Heart right ventricle (tissue), 16 donors: ENCODE measurements at regions of chr2 and their contacts with region 1.

Region 1: GRCh38 chr2:9555297-9556141 is at the start of gene ADAM17:
- DNase-seq: peak; percentile 97
- ATAC-seq: peak; percentile 96 to 98 (median 97)
- H3K4me3 ChIP-seq: peak within 1 kb of the TSS; percentile 69 to 95 (median 86)
- H3K27ac ChIP-seq: peak within 1 kb of the TSS; percentile 95 to 100 (median 99)
- H3K4me1 ChIP-seq: peaks cover 4 to 60% (median 52%) of the 10 kb centered on the region in 9 donors
- H3K27me3 ChIP-seq: no peaks in the 10 kb centered on the region
- CTCF ChIP-seq: peak; percentile 28 to 68 (median 55)
- total RNA-seq, gene ADAM17: 11.4 to 20.0 (median 14.6) TPM

Region 2: GRCh38 chr2:9573840-9574239 is 18.3 kb after region 1 on chr2:
- intact Hi-C with region 1: loop called in 1 of 10 experiments (anchors 1 kb)
- DNase-seq: no peak
- ATAC-seq: no peak
- H3K4me3 ChIP-seq: no peak overlapping the region
- H3K27ac ChIP-seq: peak overlapping the region in 9 of 10 donors; percentile 7 to 79 (median 58)
- H3K4me1 ChIP-seq: peaks cover 0 to 51% (median 27%) of the 10 kb centered on the region in 9 donors
- H3K27me3 ChIP-seq: no peaks in the 10 kb centered on the region
- CTCF ChIP-seq: no peak

Region 3: DNA sequence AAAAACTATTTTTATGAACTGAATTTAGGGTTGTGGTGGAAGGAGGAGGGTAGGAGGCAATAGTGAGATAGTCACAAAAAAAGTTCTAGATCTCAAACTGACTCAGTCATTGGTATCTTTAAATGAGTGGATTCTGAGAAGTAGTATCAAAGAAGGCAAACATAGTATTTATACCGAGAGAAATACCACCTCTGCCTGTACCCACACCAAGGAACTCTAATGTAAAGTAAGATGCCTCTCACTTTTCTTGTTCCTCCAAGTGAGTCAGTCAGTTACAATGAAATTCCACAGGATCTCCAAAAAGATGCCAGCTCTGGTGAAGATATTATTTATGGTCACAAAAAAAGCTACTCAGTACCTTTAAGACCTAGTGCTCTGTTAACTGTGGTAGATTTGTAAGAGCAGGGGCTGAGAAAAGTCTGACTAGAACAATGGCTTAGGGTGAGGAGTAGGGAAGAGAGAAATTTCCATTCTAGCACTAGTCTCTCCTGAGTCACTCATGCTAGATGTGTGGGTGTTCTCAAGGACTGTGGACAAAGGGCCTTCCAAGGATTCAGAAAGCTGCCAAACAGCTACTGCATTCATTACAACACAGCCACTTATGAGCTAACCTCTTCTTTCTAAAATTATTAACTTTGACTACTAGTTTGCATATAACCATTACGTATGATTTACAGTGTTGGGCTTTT is 39.0 kb after region 1 on chr2:
- intact Hi-C with region 1: loop called in 1 of 10 experiments (anchors 5 kb)
- DNase-seq: peak in 1 of 2 donors; percentile 33
- ATAC-seq: peak; percentile 67 to 96 (median 87)
- H3K4me3 ChIP-seq: no peak overlapping the region
- H3K27ac ChIP-seq: peak overlapping the region in 5 of 10 donors; percentile 31 to 64 (median 38)
- H3K4me1 ChIP-seq: peaks cover 8 to 53% (median 44%) of the 10 kb centered on the region in 9 donors
- H3K27me3 ChIP-seq: no peaks in the 10 kb centered on the region
- CTCF ChIP-seq: no peak

Region 4: DNA sequence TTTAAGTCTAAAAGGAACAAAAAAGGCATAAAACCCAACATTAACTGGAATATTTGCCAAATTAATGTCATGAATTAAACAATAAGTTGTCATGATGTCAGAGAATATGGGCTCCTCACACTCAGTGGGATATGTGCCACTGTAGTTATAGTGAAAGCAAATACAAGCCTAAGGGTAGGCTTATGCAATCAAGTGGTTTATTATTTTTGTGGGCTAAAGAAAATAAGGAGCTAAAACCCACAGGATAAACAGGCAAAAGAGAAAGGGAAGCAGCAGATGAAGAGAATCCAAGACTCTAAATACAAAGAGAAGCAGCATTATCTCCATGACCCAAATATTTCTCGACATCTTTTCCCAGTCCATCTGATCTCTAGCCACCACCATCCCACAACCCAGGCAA is 57.8 kb after region 1 on chr2:
- intact Hi-C with region 1: loop called in 1 of 10 experiments (anchors 5 kb)
- DNase-seq: no peak
- ATAC-seq: peak in 2 of 8 donors; percentile 51 to 58
- H3K4me3 ChIP-seq: no peak overlapping the region
- H3K27ac ChIP-seq: peak overlapping the region in 1 of 10 donors; percentile 2
- H3K4me1 ChIP-seq: peaks cover 10 to 91% (median 82%) of the 10 kb centered on the region in 9 donors
- H3K27me3 ChIP-seq: no peaks in the 10 kb centered on the region
- CTCF ChIP-seq: no peak

Region 5: DNA sequence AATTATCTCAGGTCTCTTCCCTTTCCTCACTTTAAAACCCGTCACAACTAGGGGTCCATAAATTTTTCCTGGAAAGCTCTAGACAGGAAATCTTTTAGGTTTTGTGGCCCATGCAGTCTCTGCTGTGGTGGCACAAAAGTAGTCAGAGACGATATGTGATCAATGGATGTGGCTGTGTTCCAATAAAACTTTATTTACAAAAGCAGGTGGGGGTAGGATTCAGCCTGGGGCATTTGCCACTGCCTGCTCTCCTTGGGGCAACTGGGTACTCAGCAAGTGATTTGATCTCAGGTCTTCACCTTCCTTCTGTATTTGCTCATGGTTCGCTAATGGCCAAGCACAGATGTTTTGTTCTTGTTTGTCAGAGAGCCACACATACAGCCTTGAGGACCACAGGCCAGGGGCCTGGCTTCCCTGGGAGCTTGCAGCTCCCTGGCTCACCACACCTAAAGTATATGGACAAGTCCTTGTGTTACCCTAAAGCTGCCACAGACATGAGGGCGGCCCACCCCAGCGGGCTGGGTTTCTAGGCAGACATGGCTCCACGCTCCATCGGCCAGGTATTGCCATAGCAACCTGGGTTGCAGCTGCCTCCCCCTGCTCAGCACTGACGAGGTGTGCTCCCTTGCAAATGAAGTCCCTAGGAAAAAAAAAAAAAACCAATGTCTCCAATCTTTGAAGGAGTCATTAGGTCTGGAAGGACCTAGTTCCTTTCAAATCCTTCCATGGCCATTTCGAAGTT is 165.0 kb after region 1 on chr2:
- intact Hi-C with region 1: no loop called
- DNase-seq: no peak
- ATAC-seq: no peak
- H3K4me3 ChIP-seq: no peak overlapping the region
- H3K27ac ChIP-seq: no peak overlapping the region
- H3K4me1 ChIP-seq: no peaks in the 10 kb centered on the region
- H3K27me3 ChIP-seq: no peaks in the 10 kb centered on the region
- CTCF ChIP-seq: no peak

Region 6: GRCh38 chr2:9770308-9771100 is 215.0 kb after region 1 on chr2:
- intact Hi-C with region 1: loop called in 3 of 10 experiments (anchors 10 kb)
- DNase-seq: peak in 1 of 2 donors; percentile 74
- ATAC-seq: peak; percentile 37 to 66 (median 52)
- H3K4me3 ChIP-seq: peak overlapping the region in 3 of 10 donors; percentile 6 to 19 (median 10)
- H3K27ac ChIP-seq: peak overlapping the region in 9 of 10 donors; percentile 13 to 84 (median 74)
- H3K4me1 ChIP-seq: peaks cover 17 to 75% (median 38%) of the 10 kb centered on the region in 9 donors
- H3K27me3 ChIP-seq: no peaks in the 10 kb centered on the region
- CTCF ChIP-seq: peak; percentile 51 to 84 (median 72)